Esophagus muscularis mucosa (tissue), 4 donors: ENCODE measurements at regions of chr16 and their contacts with region 1.

Region 1: DNA sequence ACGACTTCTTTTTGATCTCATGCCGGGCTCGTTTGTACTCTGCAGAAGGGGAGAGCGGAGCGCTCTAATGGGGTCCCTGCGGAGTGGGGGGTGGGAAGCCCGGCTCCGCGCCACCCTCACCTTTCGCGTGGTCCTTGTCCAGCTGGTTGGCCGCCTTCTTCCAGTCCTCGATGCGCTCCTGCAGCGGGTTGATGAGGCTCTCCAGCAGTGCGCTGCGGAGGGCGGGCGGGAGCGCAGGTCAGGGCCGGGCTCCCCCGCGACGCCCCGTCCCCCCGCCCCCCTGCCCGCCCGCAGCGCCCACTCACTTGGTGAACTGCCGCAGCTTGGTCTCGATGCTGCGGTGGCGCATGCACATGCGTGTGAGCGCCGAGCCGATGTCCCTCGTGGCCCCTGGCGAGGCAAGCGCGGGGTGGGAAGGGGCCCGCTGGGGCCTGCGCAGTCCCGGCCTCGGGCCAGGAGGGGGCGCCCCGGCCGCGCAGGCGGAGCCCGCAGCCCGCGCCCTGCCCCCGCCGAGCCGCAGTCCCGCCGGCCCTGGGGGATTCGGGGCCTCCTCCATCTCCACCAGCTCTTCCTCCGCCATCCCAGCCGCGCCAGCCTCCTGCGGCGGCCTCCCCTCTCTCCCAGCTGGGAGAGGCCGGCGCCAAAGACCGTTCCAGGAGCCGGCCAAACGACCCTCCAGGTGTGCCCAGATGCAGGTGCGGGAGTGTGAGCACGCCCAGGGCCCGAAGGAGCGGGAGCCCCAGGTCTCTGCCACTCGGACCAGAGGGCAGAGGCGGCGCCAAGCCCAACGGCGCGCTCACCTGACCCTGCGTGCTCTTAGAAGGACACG is 6.0 kb downstream of the MTSS2 start:
- DNase-seq: no peak
- H3K4me3 ChIP-seq: no peak overlapping the region
- H3K27ac ChIP-seq: peak overlapping the region; percentile 86 to 99 (median 93)
- H3K4me1 ChIP-seq: peaks cover 51 to 82% (median 73%) of the 10 kb centered on the region in 4 donors
- H3K27me3 ChIP-seq: no peaks in the 10 kb centered on the region
- CTCF ChIP-seq: peak; percentile 74 to 89 (median 77)
- EP300 ChIP-seq: no peak
- POLR2A ChIP-seq: no peak

Region 2: DNA sequence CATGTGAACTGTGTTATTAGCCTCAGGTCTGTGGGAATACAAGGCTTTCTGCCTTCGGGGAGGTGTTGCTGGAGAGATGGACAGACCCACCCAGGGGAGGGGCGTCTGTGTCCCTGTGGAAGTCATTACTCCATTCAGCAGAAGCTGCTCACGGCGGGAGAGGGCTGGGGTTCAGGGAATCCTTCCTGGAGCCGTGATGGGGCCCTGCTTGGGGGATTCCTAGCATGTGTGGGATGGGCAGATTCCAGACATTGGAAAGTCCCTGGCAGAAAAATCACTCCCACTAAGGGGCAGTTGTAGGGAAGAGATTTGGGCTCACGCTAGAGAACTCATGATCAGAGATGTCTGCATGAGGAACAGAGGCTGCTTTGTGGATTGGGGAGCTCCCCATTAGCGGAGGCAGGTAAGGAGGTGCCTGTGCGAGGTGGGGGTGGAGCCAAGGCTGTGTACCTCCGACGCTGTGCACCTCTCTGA is 89.8 kb before region 1 on chr16:
- intact Hi-C with region 1: no loop called
- DNase-seq: no peak
- H3K4me3 ChIP-seq: no peak overlapping the region
- H3K27ac ChIP-seq: peak overlapping the region; percentile 61 to 66 (median 62)
- H3K4me1 ChIP-seq: peaks cover 32 to 57% (median 51%) of the 10 kb centered on the region in 4 donors
- H3K27me3 ChIP-seq: no peaks in the 10 kb centered on the region
- CTCF ChIP-seq: no peak
- EP300 ChIP-seq: no peak
- POLR2A ChIP-seq: no peak

Region 3: DNA sequence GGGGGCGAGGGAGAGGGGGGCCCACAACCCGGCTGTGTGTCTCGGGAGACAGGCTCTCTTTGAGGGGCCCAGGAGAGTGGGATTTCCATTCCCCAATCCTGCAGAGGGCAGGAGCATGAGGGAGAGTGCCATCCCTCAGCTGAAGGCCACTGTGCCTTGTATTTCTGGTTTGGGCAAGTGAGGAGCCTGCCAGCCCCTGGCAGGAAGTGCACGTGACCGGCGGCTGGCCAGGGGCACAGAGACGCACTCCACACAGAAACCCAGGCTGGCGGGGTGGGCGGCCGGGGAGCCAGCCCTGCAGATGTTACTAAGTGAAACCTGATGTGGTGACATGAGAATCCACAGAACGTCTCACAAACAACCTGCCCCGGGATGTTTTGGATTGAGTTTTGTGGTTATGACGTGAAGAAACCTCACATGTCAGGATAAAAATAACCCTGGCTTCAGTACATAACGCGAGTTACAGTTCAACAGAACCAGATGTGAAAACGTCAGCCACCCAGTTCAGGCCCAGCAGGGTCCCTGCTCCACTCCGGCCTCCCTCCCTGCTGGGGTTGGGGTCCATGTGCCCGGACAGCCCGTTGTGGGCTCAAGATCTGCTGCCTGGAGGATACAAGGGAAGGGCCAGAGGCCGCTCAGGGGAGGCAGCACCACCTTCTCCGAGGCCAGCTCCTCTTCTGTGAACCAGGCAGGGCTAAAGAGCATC is 57.6 kb after region 1 on chr16:
- intact Hi-C with region 1: loop called (anchors 1 kb)
- DNase-seq: no peak
- H3K4me3 ChIP-seq: peak overlapping the region in 2 of 4 donors; percentile 10 to 13
- H3K27ac ChIP-seq: peak overlapping the region; percentile 92 to 96 (median 93)
- H3K4me1 ChIP-seq: peaks cover 29 to 65% (median 58%) of the 10 kb centered on the region in 4 donors
- H3K27me3 ChIP-seq: no peaks in the 10 kb centered on the region
- CTCF ChIP-seq: no peak
- EP300 ChIP-seq: peak; percentile 82
- POLR2A ChIP-seq: no peak

Region 4: GRCh38 chr16:70770626-70771552 is 91.0 kb after region 1 on chr16:
- intact Hi-C with region 1: loop called (anchors 1 kb)
- DNase-seq: peak; percentile 93
- H3K4me3 ChIP-seq: no peak overlapping the region
- H3K27ac ChIP-seq: no peak overlapping the region
- H3K4me1 ChIP-seq: peaks cover 0 to 10% (median 7%) of the 10 kb centered on the region in 4 donors
- H3K27me3 ChIP-seq: no peaks in the 10 kb centered on the region
- CTCF ChIP-seq: peak; percentile 92 to 95 (median 94)
- EP300 ChIP-seq: no peak
- POLR2A ChIP-seq: no peak